ENCODE measurements at regions of chr10 and their contacts with region 1.

Region 1: GRCh38 chr10:71255808-71256660 is 43.7 kb downstream of the UNC5B start:
- DNase-seq: peak; percentile 64
- H3K4me3 ChIP-seq: no peak overlapping the region
- H3K27ac ChIP-seq: no peak overlapping the region
- H3K4me1 ChIP-seq: peaks cover 36% of the 10 kb centered on the region
- H3K27me3 ChIP-seq: no peaks in the 10 kb centered on the region
- CTCF ChIP-seq: no peak

Region 2: DNA sequence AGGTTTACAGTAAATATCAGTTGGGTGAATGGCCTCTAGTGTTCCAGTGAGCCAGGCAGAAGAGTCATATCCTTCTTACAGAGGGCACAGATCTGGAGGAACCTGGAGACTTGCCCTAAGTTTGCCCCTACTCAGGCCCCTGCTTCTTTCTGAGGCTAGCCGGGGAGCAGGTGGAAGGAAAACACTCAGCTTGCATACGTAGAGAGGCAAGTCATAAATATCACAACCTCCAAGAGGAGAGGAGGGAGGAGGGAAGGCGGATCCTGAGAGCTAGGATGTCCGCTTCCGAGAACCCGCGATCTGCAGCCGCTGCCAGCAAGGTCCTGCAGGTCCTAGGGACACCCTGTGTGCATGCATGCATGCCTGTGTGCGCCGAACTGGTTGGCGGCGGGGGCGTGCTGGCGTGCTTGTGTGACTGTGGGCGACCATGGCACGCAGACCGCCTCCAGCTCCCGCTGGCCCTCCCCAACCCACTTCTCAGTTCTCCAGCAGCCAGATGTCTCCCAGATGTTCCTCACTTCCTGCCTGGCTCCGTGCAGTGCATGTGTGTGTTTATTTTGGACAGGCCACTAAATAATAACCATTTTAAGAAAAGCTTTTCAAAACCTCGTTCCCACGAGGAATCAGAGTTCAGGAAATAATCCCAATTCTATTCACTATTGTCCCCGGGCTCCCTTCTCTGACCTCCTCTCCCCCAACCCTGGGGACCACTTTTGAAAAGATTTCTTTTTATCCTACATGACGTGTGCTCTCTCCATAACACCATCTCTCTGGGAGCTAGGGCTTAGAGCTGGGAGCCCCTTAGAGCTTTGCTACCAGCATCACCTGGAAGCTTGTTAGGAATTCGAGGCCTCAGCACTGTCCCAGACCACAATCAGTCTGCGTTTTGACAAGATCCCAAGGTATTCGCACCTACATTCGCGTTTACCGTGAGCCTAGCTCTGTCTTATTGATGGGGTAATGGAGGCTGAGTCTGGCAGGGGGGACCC is 11.3 kb before region 1 on chr10:
- CTCF ChIA-PET with region 1: interaction called, 5 read pairs
- dilution Hi-C with region 1: no loop called
- in situ Hi-C with region 1: no loop called
- intact Hi-C with region 1: loop called (anchors 1 kb)
- DNase-seq: no peak
- H3K4me3 ChIP-seq: no peak overlapping the region
- H3K27ac ChIP-seq: peak overlapping the region; percentile 30
- H3K4me1 ChIP-seq: peaks cover 61% of the 10 kb centered on the region
- H3K27me3 ChIP-seq: no peaks in the 10 kb centered on the region
- CTCF ChIP-seq: no peak

Region 3: DNA sequence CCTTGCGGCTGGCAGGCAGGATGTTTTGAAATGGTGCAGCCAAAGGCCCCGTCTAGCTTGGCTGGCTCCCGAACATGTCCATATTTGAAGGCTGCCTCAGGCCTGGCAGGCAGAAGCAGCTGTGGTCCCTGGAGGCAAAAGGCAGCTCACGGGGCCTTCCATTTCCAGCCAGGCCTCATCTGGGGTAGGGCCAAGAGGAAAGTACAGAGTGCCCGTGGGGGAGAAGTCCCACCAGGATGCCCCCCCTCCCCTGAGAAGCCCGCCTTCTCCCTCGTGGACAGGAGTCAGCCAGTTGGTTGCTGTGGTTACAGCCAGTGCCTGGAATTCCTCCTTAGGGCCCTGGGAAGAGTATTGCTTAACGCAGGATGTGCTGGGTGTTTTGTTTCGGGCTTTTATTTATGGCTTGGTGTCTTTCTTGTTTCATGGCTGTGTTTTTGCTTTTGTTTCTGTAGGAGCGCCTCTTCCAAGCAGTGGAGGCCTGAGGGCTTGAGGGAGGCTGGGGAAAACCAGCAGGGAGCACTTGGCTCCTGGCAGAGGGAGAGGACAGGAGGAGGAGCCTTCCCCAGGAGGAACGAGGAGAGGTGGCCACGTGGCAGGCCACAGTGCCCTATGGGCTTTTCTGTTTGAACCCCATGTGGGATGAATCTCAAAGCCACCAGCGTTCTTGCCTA is 753.5 kb after region 1 on chr10:
- CTCF ChIA-PET with region 1: no interaction called
- dilution Hi-C with region 1: no loop called
- in situ Hi-C with region 1: no loop called
- intact Hi-C with region 1: no loop called
- DNase-seq: peak; percentile 91
- H3K4me3 ChIP-seq: no peak overlapping the region
- H3K27ac ChIP-seq: peak overlapping the region; percentile 92
- H3K4me1 ChIP-seq: peaks cover 34% of the 10 kb centered on the region
- H3K27me3 ChIP-seq: no peaks in the 10 kb centered on the region
- CTCF ChIP-seq: no peak